A549 (cell line): ENCODE measurements at regions of chr13 and their contacts with region 1.

Region 1: GRCh38 chr13:20160847-20161274 is at the start of gene GJA3:
- DNase-seq: peak; percentile 13 to 29
- ATAC-seq: peak; percentile 77 to 80
- H3K4me3 ChIP-seq: peak within 1 kb of the TSS; percentile 47
- H3K27ac ChIP-seq: peak within 1 kb of the TSS in 1 of 2 experiments; percentile 42; a peak in 1 of 6 replicates
- H3K4me1 ChIP-seq: peaks cover 7% of the 10 kb centered on the region; the same call in 1 of the 3 replicates
- CTCF ChIP-seq: no peak
- EP300 ChIP-seq: no peak
- POLR2A ChIP-seq: no peak
- RAD21 ChIP-seq: no peak
- polyA plus RNA-seq, gene GJA3: 0.06 and 0.08 TPM in 2 replicates

Region 2: GRCh38 chr13:19845758-19846157 is 315.1 kb before region 1 on chr13:
- CTCF ChIA-PET with region 1: no interaction called
- POLR2A ChIA-PET with region 1: no interaction called
- DNase-seq: peak; percentile 76 to 78
- ATAC-seq: peak; percentile 93 to 97
- H3K4me3 ChIP-seq: no peak overlapping the region
- H3K27ac ChIP-seq: peak overlapping the region; percentile 49 to 58; a peak in 5 of 6 replicates
- H3K4me1 ChIP-seq: peaks cover 18% of the 10 kb centered on the region
- CTCF ChIP-seq: no peak
- EP300 ChIP-seq: no peak
- POLR2A ChIP-seq: no peak
- RAD21 ChIP-seq: no peak

Region 3: DNA sequence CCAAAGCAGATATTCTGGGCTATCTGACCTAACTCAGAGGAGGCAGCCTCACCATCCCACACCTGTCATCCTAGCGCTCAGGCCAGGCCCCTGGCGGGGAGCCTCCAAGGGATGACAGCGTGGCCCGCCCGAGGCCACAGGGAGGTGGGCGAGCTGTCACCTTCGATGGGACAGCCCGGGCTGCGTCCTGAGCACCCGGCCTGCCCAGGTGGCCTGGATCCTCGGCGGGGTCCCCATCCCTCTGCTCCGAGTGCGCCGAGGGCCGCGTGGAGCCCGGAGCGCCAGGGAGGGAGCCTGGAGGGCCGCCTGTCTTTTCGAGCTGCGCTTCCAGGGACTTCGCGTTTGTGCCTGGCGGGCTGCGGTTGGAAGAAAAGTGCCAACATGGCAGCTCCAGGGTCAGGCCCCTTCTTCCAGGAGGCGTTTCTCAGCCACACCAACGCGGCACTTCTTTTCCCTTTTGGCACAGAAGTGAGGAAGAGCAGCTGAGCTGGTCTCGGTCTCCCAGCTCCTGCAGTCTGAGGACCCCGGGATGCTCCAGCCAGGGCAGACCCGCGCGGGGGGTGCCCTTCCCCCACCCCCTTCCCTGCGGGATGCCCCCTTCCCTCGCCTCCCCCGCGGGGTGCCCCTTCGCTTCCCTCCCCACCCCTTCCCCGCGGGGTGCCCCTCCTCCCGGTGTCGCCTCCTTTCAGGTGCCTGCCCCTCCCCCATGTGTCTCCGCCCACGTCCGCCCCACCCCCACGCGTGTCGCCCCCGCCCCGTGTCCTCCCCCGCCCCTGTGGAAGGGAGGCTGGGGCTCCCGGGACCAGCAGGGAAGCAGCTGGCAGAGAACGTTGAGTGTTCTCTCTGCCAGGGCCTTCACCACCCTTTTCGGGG is 42.4 kb before region 1 on chr13:
- CTCF ChIA-PET with region 1: interaction called, 11 read pairs
- POLR2A ChIA-PET with region 1: no interaction called
- DNase-seq: peak; percentile 21 to 68
- ATAC-seq: peak; percentile 77 to 81
- H3K4me3 ChIP-seq: peak overlapping the region; percentile 76
- H3K27ac ChIP-seq: peak overlapping the region; percentile 82 to 91
- H3K4me1 ChIP-seq: peaks cover 6% of the 10 kb centered on the region; the same call in 1 of the 3 replicates
- CTCF ChIP-seq: no peak
- EP300 ChIP-seq: no peak
- POLR2A ChIP-seq: no peak
- RAD21 ChIP-seq: no peak

Region 4: DNA sequence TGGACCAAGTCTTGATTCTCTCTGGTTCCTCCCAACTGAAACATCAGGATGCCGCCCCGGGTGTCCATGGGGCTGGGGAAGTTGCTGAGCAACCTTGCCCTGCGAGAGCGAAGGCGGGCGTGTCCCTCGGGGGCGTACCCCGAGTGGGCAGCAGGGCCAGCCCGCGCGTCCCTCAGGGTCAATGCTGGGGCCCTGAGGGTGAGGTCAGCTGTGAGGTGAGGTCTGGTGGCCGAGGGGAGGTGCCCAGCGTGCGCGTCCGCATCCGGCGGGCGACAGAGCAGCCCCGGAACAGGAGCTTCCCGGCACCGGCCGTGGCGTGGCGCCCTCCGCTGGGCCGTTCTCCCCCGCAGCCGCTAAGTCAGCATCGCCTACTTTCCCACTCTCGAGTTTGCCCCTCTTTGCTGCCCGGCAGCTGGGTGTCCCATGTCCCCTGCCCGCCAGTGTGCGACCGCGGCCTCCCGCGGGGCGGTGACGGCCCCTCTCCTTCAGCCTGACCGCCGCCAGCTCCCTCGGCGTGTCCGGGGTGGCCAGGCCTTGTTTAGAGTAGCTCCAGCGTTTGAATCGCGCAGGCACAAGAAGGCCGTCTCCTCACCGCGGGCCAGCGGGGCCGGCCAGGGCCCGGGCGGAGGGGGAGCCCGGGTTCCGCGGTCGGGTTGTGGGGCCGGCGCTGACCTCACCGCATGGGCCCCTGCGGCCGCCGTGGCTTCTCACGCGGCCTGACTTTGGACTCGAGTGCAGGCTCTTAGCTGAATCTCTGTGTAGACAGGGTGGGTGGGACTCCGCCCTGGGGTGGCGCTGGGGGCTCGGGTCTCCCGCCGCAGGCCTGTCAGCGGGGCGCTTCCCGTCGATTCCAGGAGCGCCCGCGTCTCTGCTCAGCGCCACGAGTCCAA is 33.0 kb before region 1 on chr13:
- CTCF ChIA-PET with region 1: interaction called, 19 read pairs
- POLR2A ChIA-PET with region 1: no interaction called
- DNase-seq: peak; percentile 21 to 60
- ATAC-seq: peak; percentile 91 to 92
- H3K4me3 ChIP-seq: peak overlapping the region; percentile 52
- H3K27ac ChIP-seq: peak overlapping the region; percentile 83 to 93
- H3K4me1 ChIP-seq: peaks cover 13% of the 10 kb centered on the region; the same call in 2 of the 3 replicates
- CTCF ChIP-seq: peak; percentile 44
- EP300 ChIP-seq: no peak
- POLR2A ChIP-seq: peak; percentile 49
- RAD21 ChIP-seq: 0 out of 5 replicates have a peak, but pooled peaks of 1 of the 2 experiments have one; percentile 10

Region 5: DNA sequence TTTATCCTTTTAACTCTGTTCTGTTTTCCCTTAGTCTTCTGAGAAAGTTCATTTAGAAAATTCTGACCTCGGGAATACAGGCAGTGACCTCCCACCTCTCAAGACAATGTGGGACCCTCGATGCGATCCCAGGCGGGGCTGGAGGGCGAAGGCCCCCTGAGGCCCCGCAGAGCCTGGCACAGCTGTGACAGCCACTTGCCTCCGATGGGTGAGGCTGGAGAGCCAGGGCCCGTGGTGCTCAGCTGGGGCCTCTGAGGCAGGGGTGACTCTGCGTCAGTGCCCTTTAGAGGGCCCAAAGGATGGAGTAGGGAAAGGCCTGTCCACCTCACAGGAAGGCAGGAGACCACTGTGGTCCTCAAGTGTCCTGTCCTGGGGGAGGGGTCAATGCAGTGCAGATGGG is 10.3 kb before region 1 on chr13:
- CTCF ChIA-PET with region 1: no interaction called
- POLR2A ChIA-PET with region 1: no interaction called
- DNase-seq: no peak
- ATAC-seq: no peak
- H3K4me3 ChIP-seq: no peak overlapping the region
- H3K27ac ChIP-seq: no peak overlapping the region
- H3K4me1 ChIP-seq: no peaks in the 10 kb centered on the region
- CTCF ChIP-seq: no peak
- EP300 ChIP-seq: no peak
- POLR2A ChIP-seq: no peak
- RAD21 ChIP-seq: no peak

Region 6: DNA sequence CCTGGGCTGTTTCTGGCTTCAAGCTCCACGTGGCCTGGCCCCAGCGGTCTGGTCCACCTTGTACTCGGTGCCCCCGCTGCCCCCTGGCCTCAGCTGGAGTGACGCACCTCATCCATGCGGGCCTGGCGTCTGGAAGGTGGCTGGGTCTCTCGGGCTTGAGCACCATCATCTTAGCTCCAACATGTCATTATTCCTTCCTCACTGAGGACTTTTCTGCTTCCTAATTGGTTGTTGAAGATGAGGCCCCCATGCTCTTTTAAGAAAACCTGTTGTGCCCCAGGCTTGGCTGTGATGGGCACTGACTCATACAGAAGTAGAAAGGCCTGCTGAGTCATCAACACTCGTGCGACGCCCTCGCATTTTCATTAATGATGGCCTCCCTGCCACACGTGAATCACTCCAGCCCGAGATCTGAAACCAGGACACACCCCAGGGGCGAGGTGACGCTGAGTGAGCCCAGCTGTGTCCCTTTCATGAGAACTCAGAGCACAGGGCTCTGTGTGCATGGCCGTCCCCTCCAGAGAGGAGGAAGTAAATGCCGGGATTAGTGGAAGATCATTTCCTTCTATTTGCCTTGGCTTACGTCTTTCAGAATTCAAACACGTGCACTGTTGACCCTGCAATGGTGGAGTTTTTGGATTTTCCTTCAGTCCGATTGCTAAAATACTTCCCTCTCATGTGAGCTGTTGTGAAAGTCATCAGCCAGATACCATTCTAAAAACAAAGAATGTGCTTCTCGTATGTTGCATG is 14.0 kb after region 1 on chr13:
- CTCF ChIA-PET with region 1: interaction called, 10 read pairs
- POLR2A ChIA-PET with region 1: no interaction called
- DNase-seq: peak; percentile 69 to 84
- ATAC-seq: peak; percentile 89 to 90
- H3K4me3 ChIP-seq: no peak overlapping the region
- H3K27ac ChIP-seq: peak overlapping the region; percentile 59 to 80
- H3K4me1 ChIP-seq: peaks cover 17% of the 10 kb centered on the region
- CTCF ChIP-seq: no peak
- EP300 ChIP-seq: no peak
- POLR2A ChIP-seq: no peak
- RAD21 ChIP-seq: no peak